Endothelial cell of umbilical vein (primary cell): ENCODE measurements at regions of chr5 and their contacts with region 1.

Region 1: GRCh38 chr5:69334793-69335268 is 2.2 kb upstream of the CCDC125 start:
- DNase-seq: peak; percentile 69
- H3K4me3 ChIP-seq: no peak overlapping the region
- H3K27ac ChIP-seq: no peak overlapping the region
- H3K4me1 ChIP-seq: peaks cover 7% of the 10 kb centered on the region
- H3K27me3 ChIP-seq: no peaks in the 10 kb centered on the region
- CTCF ChIP-seq: peak; percentile 77 to 97
- POLR2A ChIP-seq: no peak

Region 2: DNA sequence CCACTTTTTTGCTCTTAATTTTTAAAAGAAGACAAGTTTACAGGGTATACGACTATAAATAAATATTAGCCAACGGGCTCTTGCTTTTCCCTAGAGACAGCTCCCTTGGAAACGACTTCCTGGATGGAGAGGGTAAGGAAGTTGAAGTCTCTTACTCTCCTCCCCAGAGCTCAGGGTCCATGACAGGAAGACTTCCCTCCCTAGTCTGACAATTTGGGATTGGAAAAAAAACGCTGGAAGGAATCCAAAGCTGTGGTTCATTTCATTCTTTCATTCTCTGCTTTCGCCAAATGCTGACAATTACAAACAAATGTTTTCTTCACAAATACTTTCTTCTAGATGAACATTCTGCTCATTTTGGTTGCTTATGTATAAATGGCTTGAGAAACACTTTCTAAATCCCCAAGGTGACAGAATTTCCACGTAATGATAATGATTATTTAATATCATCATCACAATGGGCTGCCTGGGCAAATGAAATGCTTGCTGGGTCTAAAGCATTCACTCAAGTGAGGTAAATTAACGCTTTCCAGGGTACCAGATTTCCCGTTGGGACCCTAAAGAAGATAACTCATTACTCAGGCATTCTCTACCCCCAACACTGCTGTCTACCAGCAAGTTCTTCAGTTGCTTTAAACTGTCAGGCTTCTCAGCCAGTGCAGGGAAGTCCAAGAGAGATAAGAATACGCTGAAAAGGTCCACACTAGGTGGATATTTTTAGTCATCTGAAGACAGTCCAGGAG is 380.8 kb before region 1 on chr5:
- CTCF ChIA-PET with region 1: no interaction called
- POLR2A ChIA-PET with region 1: no interaction called
- dilution Hi-C with region 1: no loop called
- intact Hi-C with region 1: no loop called
- DNase-seq: no peak
- H3K4me3 ChIP-seq: no peak overlapping the region
- H3K27ac ChIP-seq: no peak overlapping the region
- H3K4me1 ChIP-seq: no peaks in the 10 kb centered on the region
- H3K27me3 ChIP-seq: peaks cover 0 to 6% of the 10 kb centered on the region in 2 experiments
- CTCF ChIP-seq: no peak
- POLR2A ChIP-seq: no peak

Region 3: DNA sequence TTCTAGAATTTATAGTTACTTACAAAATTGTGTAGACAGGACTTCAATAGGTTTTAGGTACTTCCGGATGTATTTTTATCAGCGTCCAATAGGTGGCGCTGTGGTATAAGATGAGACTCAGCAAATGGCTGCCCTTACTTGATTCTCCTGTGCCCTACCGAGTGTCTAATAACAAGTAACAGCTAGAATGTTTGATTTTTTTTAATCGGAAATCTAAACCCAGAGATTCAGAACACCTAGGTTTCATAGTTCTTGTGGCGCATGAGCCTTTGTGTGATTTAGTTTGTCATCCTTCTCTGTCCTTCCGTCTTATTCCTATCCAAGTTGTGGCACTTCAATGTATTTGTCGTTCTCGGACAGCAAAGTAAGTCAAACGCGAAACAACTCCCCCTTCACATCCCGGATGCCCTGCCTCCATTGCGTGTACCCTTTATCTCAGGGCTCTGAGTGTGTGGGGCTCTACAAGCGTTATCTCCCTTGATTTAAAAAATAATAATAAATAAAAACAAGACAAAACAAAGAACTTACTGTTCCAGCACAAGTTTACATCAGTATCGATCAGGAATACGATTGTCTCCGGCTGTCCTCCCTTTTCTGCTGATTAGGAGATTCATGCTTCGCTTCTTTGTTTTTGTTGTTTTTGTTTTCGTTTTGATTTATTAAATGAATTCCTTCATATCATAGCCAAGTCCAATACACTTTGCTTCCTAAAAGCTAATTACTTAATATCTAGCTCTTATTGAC is 291.7 kb before region 1 on chr5:
- CTCF ChIA-PET with region 1: interaction called, 16 read pairs
- POLR2A ChIA-PET with region 1: no interaction called
- dilution Hi-C with region 1: no loop called
- intact Hi-C with region 1: loop called (anchors 1 kb)
- DNase-seq: peak; percentile 94
- H3K4me3 ChIP-seq: peak overlapping the region; percentile 38 to 87 (median 82)
- H3K27ac ChIP-seq: peak overlapping the region; percentile 43
- H3K4me1 ChIP-seq: peaks cover 6% of the 10 kb centered on the region
- H3K27me3 ChIP-seq: peaks cover 5 to 6% of the 10 kb centered on the region in 2 experiments
- CTCF ChIP-seq: peak; percentile 60 to 63
- POLR2A ChIP-seq: no peak

Region 4: DNA sequence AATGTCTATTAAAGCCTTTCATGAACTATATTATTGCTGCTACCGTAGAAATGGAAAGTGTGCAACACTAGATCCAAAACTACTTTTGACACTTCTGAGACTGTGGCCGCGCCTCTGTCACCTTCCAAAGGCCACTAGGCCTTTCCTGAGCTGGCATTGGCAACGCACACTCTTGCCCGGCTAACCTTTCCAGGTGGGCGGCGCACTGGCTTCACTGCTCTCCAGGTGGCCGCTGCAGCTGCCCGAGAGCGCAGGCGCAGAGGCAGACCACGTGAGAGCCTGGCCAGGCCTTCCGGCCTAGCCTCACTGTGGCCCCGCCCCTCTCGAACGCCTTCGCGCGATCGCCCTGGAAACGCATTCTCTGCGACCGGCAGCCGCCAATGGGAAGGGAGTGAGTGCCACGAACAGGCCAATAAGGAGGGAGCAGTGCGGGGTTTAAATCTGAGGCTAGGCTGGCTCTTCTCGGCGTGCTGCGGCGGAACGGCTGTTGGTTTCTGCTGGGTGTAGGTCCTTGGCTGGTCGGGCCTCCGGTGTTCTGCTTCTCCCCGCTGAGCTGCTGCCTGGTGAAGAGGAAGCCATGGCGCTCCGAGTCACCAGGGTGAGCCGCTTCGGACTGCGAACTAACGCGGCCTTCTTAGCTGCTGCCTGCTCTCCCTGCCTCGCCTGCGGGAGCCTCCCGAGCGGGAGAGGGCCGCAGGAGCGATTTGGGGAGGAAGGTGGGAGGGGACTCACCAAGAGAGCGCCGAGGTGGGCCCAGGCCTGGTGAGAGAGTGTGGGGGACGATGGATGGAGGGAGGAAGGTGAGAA is 167.9 kb before region 1 on chr5 and contains the start of gene CCNB1:
- CTCF ChIA-PET with region 1: interaction called, 14 read pairs
- POLR2A ChIA-PET with region 1: no interaction called
- dilution Hi-C with region 1: no loop called
- intact Hi-C with region 1: loop called (anchors 5 kb)
- DNase-seq: peak; percentile 99
- H3K4me3 ChIP-seq: peak within 1 kb of the TSS; percentile 87 to 97 (median 88)
- H3K27ac ChIP-seq: peak within 1 kb of the TSS; percentile 42
- H3K4me1 ChIP-seq: peaks cover 16% of the 10 kb centered on the region
- H3K27me3 ChIP-seq: no peaks in the 10 kb centered on the region
- CTCF ChIP-seq: no peak
- POLR2A ChIP-seq: peak; percentile 78
- total RNA-seq, gene CCNB1: 187 and 211 TPM in 2 replicates

Region 5: DNA sequence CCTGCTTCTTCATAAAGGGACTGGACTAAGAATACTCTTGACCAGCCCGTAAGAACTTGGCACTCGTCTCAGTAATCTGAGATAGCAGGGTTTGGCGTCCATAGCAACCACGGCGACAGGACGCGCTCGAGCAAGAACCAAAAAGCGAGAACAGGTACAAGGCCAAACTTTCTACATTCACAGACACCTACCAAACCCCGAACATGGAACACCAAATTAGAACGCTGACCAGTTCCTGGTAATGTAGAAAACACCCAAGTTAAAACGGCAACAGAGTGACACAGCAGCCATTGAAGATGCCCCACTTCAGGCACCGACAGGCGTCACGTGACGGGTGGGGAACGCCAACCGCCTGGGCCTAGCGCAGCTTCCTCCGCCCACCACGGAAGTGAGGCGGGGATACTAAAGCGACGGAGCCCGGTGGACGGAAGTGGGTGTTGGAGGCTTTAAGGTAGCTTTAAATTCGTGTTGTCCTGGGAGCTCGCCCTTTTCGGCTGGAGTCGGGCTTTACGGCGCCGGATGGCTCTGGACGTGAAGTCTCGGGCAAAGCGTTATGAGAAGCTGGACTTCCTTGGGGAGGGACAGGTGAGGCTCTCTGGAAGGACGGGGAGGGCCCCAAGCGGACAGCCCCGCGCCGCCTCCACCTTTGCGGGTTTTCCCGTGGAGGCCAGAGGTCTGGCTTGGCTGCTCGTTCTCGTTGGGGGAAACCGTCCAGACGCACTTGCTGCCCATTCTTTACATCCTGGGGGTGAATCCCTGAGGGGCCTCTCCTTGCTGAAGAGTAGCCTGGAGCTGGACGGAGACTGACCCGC is 100.2 kb before region 1 on chr5 and contains the start of gene CDK7:
- CTCF ChIA-PET with region 1: interaction called, 6 read pairs
- POLR2A ChIA-PET with region 1: no interaction called
- dilution Hi-C with region 1: no loop called
- intact Hi-C with region 1: loop called (anchors 2 kb)
- DNase-seq: peak; percentile 95
- H3K4me3 ChIP-seq: peak within 1 kb of the TSS; percentile 50 to 98 (median 79)
- H3K27ac ChIP-seq: peak within 1 kb of the TSS; percentile 57
- H3K4me1 ChIP-seq: peaks cover 33% of the 10 kb centered on the region
- H3K27me3 ChIP-seq: no peaks in the 10 kb centered on the region
- CTCF ChIP-seq: no peak
- POLR2A ChIP-seq: peak; percentile 95
- total RNA-seq, gene CDK7: 33.4 and 38.1 TPM in 2 replicates

Region 6: GRCh38 chr5:69293895-69294294 is 40.9 kb before region 1 on chr5:
- CTCF ChIA-PET with region 1: interaction called, 4 read pairs
- POLR2A ChIA-PET with region 1: interaction called, 3 read pairs
- dilution Hi-C with region 1: no loop called
- intact Hi-C with region 1: loop called (anchors 2 kb)
- DNase-seq: no peak
- H3K4me3 ChIP-seq: no peak overlapping the region
- H3K27ac ChIP-seq: no peak overlapping the region
- H3K4me1 ChIP-seq: peaks cover 8% of the 10 kb centered on the region
- H3K27me3 ChIP-seq: no peaks in the 10 kb centered on the region
- CTCF ChIP-seq: no peak
- POLR2A ChIP-seq: no peak